ENCODE measurements at regions of chr19 and their contacts with region 1.

Region 1: DNA sequence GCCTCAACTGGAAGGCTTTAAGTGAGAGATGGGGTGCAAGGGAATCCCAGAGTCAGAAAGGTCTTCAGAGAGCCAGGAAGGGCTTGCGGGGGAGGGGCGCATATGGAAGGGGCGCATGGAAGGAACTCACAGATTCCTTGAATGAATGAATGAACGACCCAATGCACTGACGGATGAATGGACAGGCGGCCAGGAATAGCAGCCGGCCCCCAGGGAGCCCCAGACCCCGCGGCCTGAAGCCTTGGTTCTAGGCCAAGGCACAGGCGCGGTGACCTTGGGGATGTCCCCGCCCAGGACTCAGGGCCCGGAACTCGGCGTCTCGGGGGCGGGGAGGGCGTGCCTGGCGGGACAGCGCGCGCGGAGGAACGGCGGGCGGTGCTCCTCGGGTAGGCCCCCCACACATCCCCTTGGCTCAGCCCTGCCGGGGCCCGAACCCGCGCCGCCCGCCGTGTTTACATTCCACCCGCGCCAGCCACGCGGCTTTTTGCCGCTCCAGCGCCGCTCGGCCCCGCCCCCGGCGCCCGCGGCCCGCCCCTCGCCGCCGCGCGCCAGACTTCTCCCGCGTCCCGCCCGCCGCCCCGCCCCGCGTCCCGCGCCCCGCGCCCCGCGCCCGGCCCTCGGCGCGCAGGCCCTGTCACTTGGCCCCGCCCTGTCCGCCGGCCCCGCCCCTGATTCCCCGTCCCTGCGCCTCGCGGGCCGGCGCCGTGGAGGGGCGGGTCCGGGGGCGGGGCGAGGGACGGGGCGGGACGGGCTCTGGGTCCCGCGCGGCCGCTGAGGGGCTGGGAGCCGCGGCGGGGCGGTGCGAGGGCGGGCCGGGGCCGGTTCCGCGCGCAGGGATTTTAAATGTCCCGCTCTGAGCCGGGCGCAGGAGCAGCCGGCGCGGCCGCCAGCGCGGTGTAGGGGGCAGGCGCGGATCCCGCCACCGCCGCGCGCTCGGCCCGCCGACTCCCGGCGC is at the start of gene CCNE1:
- DNase-seq: peak; percentile 89 to 93
- H3K4me3 ChIP-seq: peak within 1 kb of the TSS; percentile 54 to 75
- H3K27ac ChIP-seq: peak within 1 kb of the TSS in 1 of 2 donors; percentile 51
- H3K4me1 ChIP-seq: peaks cover 0 to 16% (median 10%) of the 10 kb centered on the region in 4 donors
- H3K27me3 ChIP-seq: no peaks in the 10 kb centered on the region
- CTCF ChIP-seq: no peak

Region 2: GRCh38 chr19:29844891-29845572 is 33.6 kb after region 1 on chr19:
- intact Hi-C with region 1: loop called (anchors 2 kb)
- DNase-seq: peak; percentile 90 to 94
- H3K4me3 ChIP-seq: peak overlapping the region; percentile 64 to 67
- H3K27ac ChIP-seq: peak overlapping the region; percentile 66 to 76
- H3K4me1 ChIP-seq: peaks cover 0 to 25% (median 19%) of the 10 kb centered on the region in 4 donors
- H3K27me3 ChIP-seq: peaks cover 0 to 9% of the 10 kb centered on the region in 2 donors
- CTCF ChIP-seq: no peak